ENCODE measurements at regions of chr1 and their contacts with region 1.

Region 1: GRCh38 chr1:162633081-162633762 is 958 bp downstream of the DDR2 start:
- DNase-seq: peak in 4 of 5 donors; percentile 28 to 37 (median 33)
- ATAC-seq: peak; percentile 33 to 52 (median 42)
- H3K4me3 ChIP-seq: peak overlapping the region; percentile 13 to 68 (median 52)
- H3K27ac ChIP-seq: peak overlapping the region; percentile 69 to 92 (median 84)
- H3K4me1 ChIP-seq: peaks cover 0 to 45% (median 17%) of the 10 kb centered on the region in 12 donors
- H3K27me3 ChIP-seq: no peaks in the 10 kb centered on the region
- CTCF ChIP-seq: peak in 3 of 12 donors; percentile 20 to 26 (median 20)
- POLR2A ChIP-seq: no peak

Region 2: GRCh38 chr1:162670928-162671663 is 37.9 kb after region 1 on chr1:
- intact Hi-C with region 1: loop called in 2 of 10 experiments (anchors 5 kb)
- DNase-seq: no peak
- ATAC-seq: peak in 3 of 4 donors; percentile 45 to 80 (median 75)
- H3K4me3 ChIP-seq: no peak overlapping the region
- H3K27ac ChIP-seq: peak overlapping the region in 6 of 12 donors; percentile 17 to 82 (median 38)
- H3K4me1 ChIP-seq: peaks cover 0 to 38% (median 14%) of the 10 kb centered on the region in 12 donors
- H3K27me3 ChIP-seq: no peaks in the 10 kb centered on the region
- CTCF ChIP-seq: no peak
- POLR2A ChIP-seq: no peak

Region 3: GRCh38 chr1:162678439-162678838 is 45.2 kb after region 1 on chr1:
- intact Hi-C with region 1: loop called in 3 of 10 experiments (anchors 5 kb)
- DNase-seq: peak in 2 of 5 donors; percentile 14 to 59
- ATAC-seq: peak in 3 of 4 donors; percentile 53 to 78 (median 76)
- H3K4me3 ChIP-seq: no peak overlapping the region
- H3K27ac ChIP-seq: peak overlapping the region in 8 of 12 donors; percentile 4 to 82 (median 36)
- H3K4me1 ChIP-seq: peaks cover 0 to 56% (median 28%) of the 10 kb centered on the region in 12 donors
- H3K27me3 ChIP-seq: no peaks in the 10 kb centered on the region
- CTCF ChIP-seq: no peak
- POLR2A ChIP-seq: no peak

Region 4: DNA sequence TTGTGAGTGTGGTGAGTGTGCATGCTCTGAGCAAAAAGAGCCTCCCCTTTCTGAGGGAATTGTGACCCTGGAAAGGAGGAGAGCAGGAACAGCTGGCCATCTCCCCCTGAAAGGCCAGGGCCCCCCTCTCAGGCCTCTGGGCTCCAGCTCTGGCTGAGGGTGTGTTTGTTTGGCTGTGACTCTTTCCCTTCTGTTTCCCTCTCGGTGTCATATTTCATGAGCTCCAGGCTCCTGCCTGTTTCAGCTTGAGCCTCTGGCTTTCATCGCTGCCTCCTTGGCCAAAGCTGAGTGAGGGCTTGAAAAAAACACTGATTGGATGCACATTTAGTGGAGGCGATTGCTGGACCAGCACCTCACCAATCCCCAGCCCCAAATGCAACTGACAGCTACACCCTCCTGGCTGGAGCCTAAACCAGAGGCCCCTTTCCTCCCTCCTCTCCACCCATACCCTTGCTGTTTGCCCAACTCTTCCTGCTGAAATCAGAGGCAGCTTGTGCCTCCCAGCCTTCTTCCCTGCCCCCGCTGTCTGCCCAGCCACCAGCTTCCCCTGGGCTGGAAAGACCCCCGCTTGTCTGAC is 63.2 kb after region 1 on chr1:
- intact Hi-C with region 1: loop called in 4 of 10 experiments (anchors 5 to 10 kb)
- DNase-seq: peak; percentile 75 to 91 (median 82)
- ATAC-seq: peak; percentile 94 to 98 (median 97)
- H3K4me3 ChIP-seq: peak overlapping the region in 3 of 12 donors; percentile 1 to 7 (median 2)
- H3K27ac ChIP-seq: peak overlapping the region; percentile 53 to 92 (median 76)
- H3K4me1 ChIP-seq: peaks cover 0 to 66% (median 23%) of the 10 kb centered on the region in 12 donors
- H3K27me3 ChIP-seq: no peaks in the 10 kb centered on the region
- CTCF ChIP-seq: no peak
- POLR2A ChIP-seq: no peak